CD8-positive, alpha-beta T cell (primary cell): ENCODE measurements at regions of chr9 and their contacts with region 1.

Region 1: DNA sequence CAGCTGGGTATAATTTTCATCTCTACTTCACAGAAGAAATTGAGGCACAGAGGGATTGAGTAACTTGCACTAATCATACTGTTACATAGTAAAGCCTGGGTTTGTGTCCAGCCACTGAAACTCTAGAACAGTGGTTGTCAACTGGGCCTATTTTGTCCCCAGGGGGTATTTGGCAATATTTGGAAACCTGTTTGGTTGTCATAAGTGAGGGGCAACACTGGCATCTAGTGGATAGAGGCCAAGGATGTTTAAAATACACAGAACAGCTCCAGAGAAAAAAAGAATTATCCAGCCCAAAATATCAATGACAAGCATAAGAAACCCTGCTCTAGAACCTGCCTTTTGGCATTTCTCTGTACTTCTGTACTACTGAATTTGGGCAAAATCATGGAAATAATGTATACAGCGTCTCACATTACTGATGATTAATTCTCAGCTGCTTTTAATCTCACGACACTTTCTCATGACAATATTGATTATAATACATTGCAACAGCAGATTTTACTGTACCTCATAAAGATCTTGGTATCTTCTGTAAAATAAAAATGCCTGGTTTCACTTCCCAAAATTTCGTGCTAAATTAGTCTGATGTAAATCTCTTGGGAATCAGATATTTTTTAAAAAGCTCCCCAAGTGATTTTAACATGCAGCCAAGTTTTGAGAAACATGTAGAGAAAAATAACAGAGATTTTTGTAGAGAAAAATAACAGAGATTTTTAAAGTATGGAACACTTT is 112.7 kb downstream of the RORB start:
- DNase-seq: no peak
- ATAC-seq: no peak
- H3K4me3 ChIP-seq: no peak overlapping the region
- H3K4me3 Mint-ChIP-seq: no peak overlapping the region
- H3K27ac ChIP-seq: no peak overlapping the region
- H3K27ac Mint-ChIP-seq: no peak overlapping the region
- H3K4me1 ChIP-seq: no peaks in the 10 kb centered on the region
- H3K4me1 Mint-ChIP-seq: no peaks in the 10 kb centered on the region
- H3K27me3 ChIP-seq: no peaks in the 10 kb centered on the region
- H3K27me3 Mint-ChIP-seq: peaks cover 4% of the 10 kb centered on the region
- CTCF ChIP-seq: no peak

Region 2: GRCh38 chr9:73613092-73613701 is 996.6 kb before region 1 on chr9:
- CTCF ChIA-PET with region 1: no interaction called
- POLR2A ChIA-PET with region 1: no interaction called
- intact Hi-C with region 1: no loop called
- DNase-seq: no peak
- ATAC-seq: no peak
- H3K4me3 ChIP-seq: no peak overlapping the region
- H3K4me3 Mint-ChIP-seq: no peak overlapping the region
- H3K27ac ChIP-seq: no peak overlapping the region
- H3K27ac Mint-ChIP-seq: no peak overlapping the region
- H3K4me1 ChIP-seq: no peaks in the 10 kb centered on the region
- H3K4me1 Mint-ChIP-seq: no peaks in the 10 kb centered on the region
- H3K27me3 ChIP-seq: no peaks in the 10 kb centered on the region
- H3K27me3 Mint-ChIP-seq: no peaks in the 10 kb centered on the region
- CTCF ChIP-seq: no peak

Region 3: DNA sequence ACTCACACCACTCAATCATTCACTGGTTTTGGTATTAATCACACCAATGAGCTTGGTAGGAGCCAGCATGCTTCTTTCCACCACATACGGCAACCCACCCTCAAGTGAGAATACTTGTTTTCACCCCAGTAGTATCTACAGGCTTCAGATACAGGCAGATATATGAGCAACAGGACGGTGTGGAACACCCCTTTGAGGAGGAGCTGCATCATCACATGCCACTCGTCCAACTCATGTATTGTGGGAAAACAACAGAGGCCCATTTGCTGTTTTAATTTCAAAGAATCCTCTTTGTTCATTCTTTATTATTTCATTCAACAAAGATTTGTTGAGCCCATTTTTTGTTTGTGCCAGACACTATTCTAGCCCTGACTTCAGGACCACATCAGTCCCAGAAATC is 66.7 kb before region 1 on chr9:
- CTCF ChIA-PET with region 1: no interaction called
- POLR2A ChIA-PET with region 1: no interaction called
- intact Hi-C with region 1: loop called in 1 of 2 experiments (anchors 10 kb)
- DNase-seq: no peak
- ATAC-seq: no peak
- H3K4me3 ChIP-seq: no peak overlapping the region
- H3K4me3 Mint-ChIP-seq: no peak overlapping the region
- H3K27ac ChIP-seq: no peak overlapping the region
- H3K27ac Mint-ChIP-seq: no peak overlapping the region
- H3K4me1 ChIP-seq: no peaks in the 10 kb centered on the region
- H3K4me1 Mint-ChIP-seq: no peaks in the 10 kb centered on the region
- H3K27me3 ChIP-seq: no peaks in the 10 kb centered on the region
- H3K27me3 Mint-ChIP-seq: no peaks in the 10 kb centered on the region
- CTCF ChIP-seq: no peak